HepG2 (cell line): ENCODE measurements at regions of chr2 and their contacts with region 1.

Region 1: GRCh38 chr2:218312267-218312756 is 20.0 kb upstream of the TMBIM1 start:
- DNase-seq: peak; percentile 87
- ATAC-seq: peak; percentile 80
- H3K4me3 ChIP-seq: peak overlapping the region in 1 of 3 experiments; percentile 47; a peak in 1 of 6 replicates
- H3K27ac ChIP-seq: peak overlapping the region; percentile 58
- H3K4me1 ChIP-seq: peaks cover 77% of the 10 kb centered on the region
- H3K27me3 ChIP-seq: no peaks in the 10 kb centered on the region
- CTCF ChIP-seq: no peak
- EP300 ChIP-seq: no peak; a peak in 1 of 4 replicates
- POLR2A ChIP-seq: no peak
- RAD21 ChIP-seq: no peak

Region 2: DNA sequence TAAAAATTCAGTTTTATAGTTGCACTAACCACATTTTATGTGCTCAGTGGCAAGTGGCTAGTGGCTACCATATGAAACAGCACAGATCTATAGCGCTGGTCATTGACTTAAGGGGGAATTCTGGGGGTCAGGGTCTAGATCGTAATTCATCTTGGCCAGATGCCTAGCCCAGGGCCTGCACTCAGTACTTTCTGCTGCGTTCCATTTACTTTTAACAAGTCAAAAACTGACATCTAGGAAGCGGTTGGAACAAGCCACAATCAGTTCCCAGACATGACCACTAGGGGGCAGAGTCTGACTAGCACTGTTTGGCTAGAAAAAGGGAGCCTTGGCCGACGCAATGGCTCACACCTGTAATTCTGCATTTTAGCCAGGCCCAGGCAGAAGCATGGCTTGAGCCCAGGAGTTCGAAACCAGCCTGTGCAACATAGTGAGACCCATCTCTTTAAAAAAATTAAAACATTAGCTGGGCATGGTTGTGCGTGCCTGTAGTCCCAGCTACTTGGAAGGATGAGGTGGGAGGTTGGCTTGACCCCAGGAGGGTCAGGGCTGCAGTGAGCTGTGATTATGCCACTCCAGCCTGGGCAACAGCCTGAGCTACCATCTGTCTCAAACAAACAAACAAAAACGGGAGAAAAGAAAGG is 11.0 kb before region 1 on chr2:
- CTCF ChIA-PET with region 1: no interaction called
- POLR2A ChIA-PET with region 1: no interaction called
- in situ Hi-C with region 1: no loop called
- intact Hi-C with region 1: no loop called
- DNase-seq: peak; percentile 90
- ATAC-seq: peak; percentile 64
- H3K4me3 ChIP-seq: no peak overlapping the region
- H3K27ac ChIP-seq: peak overlapping the region; percentile 25
- H3K4me1 ChIP-seq: peaks cover 63% of the 10 kb centered on the region
- H3K27me3 ChIP-seq: no peaks in the 10 kb centered on the region
- CTCF ChIP-seq: peak; percentile 99
- EP300 ChIP-seq: no peak
- POLR2A ChIP-seq: no peak
- RAD21 ChIP-seq: peak; percentile 99

Region 3: GRCh38 chr2:218354850-218355443 is 42.6 kb after region 1 on chr2:
- CTCF ChIA-PET with region 1: interaction called, 6 read pairs
- POLR2A ChIA-PET with region 1: interaction called, 5 read pairs
- in situ Hi-C with region 1: no loop called
- intact Hi-C with region 1: loop called (anchors 2 kb)
- DNase-seq: peak; percentile 86
- ATAC-seq: no peak
- H3K4me3 ChIP-seq: peak overlapping the region; percentile 22 to 59 (median 25); a peak in 5 of 6 replicates
- H3K27ac ChIP-seq: peak overlapping the region; percentile 51
- H3K4me1 ChIP-seq: peaks cover 58% of the 10 kb centered on the region
- H3K27me3 ChIP-seq: no peaks in the 10 kb centered on the region; a peak in 1 of 5 replicates
- CTCF ChIP-seq: no peak
- EP300 ChIP-seq: peak in 1 of 2 experiments; percentile 70; a peak in 2 of 4 replicates
- POLR2A ChIP-seq: peak in 1 of 2 experiments; percentile 45; a peak in 2 of 4 replicates
- RAD21 ChIP-seq: no peak